ENCODE measurements at regions of chr5 and their contacts with region 1.

Region 1: DNA sequence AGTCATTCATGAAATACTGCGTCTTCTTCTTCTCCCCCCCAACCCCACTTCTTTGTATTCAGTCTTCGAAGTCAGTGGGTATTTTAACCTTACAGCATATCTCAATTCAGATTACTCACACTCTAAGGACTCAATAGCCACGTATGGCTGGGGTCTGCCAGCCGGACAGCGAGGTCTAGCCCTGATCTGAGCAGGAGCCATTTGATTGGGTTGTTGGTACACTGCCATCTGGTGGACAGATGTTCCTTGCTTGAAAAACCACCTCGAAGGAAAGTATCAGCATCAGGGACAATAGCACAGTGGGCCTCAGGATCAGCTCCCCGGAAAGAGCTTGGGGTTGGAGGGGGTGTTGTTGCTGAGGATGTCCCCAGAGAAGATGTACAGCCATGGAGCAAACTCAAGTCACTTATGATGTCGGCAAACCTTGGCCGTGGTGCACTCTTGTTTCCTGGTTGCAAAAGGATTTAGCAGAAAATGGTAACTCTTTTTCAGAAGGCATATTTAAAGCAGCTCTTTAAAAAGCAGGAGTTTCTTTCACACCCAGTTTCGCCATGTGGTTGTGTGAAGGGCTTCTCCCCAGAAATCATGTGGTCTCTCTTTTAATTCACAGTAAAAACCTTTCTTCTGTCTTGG is 31.7 kb upstream of the KCNMB1 start:
- DNase-seq: peak; percentile 38
- H3K4me3 ChIP-seq: no peak overlapping the region
- H3K27ac ChIP-seq: no peak overlapping the region
- H3K4me1 ChIP-seq: peaks cover 0 to 6% (median 0%) of the 10 kb centered on the region in 4 donors
- H3K27me3 ChIP-seq: no peaks in the 10 kb centered on the region
- CTCF ChIP-seq: peak; percentile 54 to 76 (median 68)
- EP300 ChIP-seq: no peak
- POLR2A ChIP-seq: no peak

Region 2: DNA sequence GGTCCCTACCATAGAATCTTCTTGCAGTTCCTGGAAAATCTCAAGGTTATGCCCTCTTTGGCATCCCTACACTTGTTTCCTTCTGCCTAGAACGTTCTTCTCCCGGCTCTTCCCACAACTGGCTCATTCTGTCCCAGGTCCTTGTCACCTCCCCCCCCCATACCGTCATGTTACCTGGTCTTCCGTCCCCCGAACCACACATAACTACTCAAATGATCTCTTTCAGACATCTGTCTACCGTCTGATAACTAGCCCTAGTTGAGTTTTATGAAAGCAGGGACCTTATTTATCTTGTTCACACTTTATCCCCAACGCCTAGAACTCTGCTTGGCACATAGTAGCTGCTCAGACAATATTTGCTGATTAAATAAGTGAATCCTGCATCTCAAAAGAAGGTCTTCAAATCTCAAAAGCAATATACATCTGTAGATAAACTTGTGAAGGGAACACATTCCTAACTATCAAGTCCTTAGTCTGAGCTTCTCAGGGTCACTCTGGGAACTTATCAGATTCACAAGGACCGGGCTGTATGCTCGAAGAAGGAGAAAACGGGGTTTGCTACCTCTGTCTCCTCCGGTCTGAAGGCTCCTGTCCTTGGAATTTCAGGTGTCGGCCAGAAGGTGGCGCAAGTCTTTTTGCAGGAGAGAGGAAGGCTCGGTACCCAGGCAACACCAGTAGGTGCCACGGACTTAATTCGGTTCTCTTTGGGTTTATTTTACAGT is 153.3 kb before region 1 on chr5:
- in situ Hi-C with region 1: loop called in 2 of 4 experiments (anchors 25 kb)
- intact Hi-C with region 1: loop called (anchors 2 kb)
- DNase-seq: peak; percentile 77
- H3K4me3 ChIP-seq: no peak overlapping the region
- H3K27ac ChIP-seq: peak overlapping the region; percentile 31 to 64 (median 54)
- H3K4me1 ChIP-seq: peaks cover 5 to 32% (median 10%) of the 10 kb centered on the region in 4 donors
- H3K27me3 ChIP-seq: no peaks in the 10 kb centered on the region
- CTCF ChIP-seq: peak; percentile 73 to 85 (median 78)
- EP300 ChIP-seq: no peak
- POLR2A ChIP-seq: no peak